Activated CD4-positive, alpha-beta memory T cell treated with anti-CD3 and anti-CD28 coated beads for 36 hours (primary cell): ENCODE measurements at regions of chrX and their contacts with region 1.

Region 1: GRCh38 chrX:155094468-155095061 is 23.3 kb downstream of the BRCC3 start:
- DNase-seq: peak; percentile 17
- H3K4me3 Mint-ChIP-seq: no peak overlapping the region
- H3K27ac Mint-ChIP-seq: no peak overlapping the region
- H3K4me1 Mint-ChIP-seq: peaks cover 6% of the 10 kb centered on the region
- H3K27me3 Mint-ChIP-seq: no peaks in the 10 kb centered on the region

Region 2: DNA sequence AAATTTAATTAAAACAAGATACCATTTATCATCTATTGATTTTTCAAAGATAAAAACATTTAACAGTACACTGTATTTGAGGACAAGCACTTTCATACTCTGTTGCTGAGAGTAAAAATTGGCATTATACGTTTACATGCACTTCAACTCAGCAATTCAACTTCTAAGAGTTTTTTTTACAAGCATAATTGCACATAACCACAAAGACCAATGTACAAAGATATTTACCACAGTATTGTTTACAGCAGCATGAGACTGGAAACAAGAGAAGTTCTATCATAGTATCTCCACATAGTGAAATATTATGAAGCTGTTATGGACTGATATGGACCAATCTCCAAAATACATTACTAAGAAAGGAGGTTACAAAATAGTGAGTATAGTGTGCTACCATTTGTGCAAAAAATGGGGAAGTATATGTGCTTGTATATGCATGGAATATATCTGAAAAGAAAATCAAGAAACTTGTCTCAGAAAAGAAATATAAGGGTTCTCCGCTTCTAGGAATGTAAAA is 354.6 kb before region 1 on chrX:
- CTCF ChIA-PET with region 1: no interaction called
- POLR2A ChIA-PET with region 1: no interaction called
- intact Hi-C with region 1: no loop called
- DNase-seq: no peak
- H3K4me3 Mint-ChIP-seq: no peak overlapping the region
- H3K27ac Mint-ChIP-seq: no peak overlapping the region
- H3K4me1 Mint-ChIP-seq: peaks cover 43% of the 10 kb centered on the region
- H3K27me3 Mint-ChIP-seq: no peaks in the 10 kb centered on the region

Region 3: DNA sequence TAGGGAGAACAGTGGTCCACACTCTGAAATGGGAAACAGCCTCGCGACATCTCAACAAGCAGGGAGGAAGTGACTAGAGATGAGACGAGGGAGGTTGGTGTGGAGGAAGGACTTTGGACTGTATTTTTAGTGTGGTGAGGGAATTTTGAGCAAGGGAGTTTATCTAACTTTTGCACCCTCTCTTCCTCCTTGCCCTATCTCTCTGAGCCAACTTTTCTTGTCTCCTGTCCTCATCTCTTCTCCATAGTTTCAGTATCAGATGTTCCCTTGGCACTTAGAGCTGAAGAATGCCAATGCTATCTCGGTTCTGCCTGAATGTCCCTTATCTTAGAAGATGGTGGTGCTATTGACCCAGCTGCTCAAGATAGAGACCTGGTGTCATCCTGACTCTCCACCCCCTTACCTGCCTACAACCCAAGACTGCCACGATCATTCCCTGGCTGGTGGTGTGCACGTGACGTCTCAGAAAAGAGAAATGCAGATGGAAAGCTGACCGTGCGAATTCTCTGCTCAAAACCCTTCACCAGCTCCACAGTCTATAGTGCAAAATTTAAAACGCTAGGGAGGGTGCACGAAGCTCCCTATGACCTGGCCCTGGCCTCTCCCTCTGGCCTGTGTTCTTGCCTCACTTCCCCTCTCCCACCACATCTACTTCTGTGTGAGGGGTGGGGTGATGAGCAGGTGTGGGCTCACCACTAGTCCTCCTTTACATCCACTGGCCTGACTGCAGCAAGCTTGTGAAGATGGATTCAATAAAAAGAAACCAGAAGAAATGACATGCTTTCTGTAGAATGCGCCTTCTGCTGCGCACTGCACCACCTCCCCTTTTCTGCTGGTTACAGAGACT is 310.2 kb before region 1 on chrX:
- CTCF ChIA-PET with region 1: no interaction called
- POLR2A ChIA-PET with region 1: no interaction called
- intact Hi-C with region 1: no loop called
- DNase-seq: no peak
- H3K4me3 Mint-ChIP-seq: no peak overlapping the region
- H3K27ac Mint-ChIP-seq: no peak overlapping the region
- H3K4me1 Mint-ChIP-seq: peaks cover 13% of the 10 kb centered on the region
- H3K27me3 Mint-ChIP-seq: no peaks in the 10 kb centered on the region

Region 4: DNA sequence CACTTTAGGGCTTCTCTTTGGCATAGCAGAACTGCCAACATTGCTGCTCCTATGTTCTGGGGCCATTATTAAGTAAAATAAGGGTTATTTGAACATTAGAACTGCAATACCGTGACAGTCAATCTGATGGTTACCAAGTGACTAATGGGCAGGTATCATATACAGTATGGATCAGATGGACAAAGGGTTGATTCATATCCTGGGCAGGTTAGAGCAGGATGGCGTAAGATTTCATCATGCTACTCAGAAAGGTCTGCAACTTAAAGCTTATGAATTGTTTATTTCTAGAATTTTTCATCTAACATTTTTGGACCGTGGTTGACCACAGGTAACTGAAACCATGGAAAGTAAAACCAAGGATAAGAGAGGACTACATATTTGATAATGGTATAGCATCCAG is 17.6 kb after region 1 on chrX:
- CTCF ChIA-PET with region 1: no interaction called
- POLR2A ChIA-PET with region 1: no interaction called
- intact Hi-C with region 1: no loop called
- DNase-seq: no peak
- H3K4me3 Mint-ChIP-seq: no peak overlapping the region
- H3K27ac Mint-ChIP-seq: no peak overlapping the region
- H3K4me1 Mint-ChIP-seq: peaks cover 9% of the 10 kb centered on the region
- H3K27me3 Mint-ChIP-seq: no peaks in the 10 kb centered on the region

Region 5: GRCh38 chrX:155148724-155149537 is 54.4 kb after region 1 on chrX:
- CTCF ChIA-PET with region 1: interaction called, 9 read pairs
- POLR2A ChIA-PET with region 1: no interaction called
- intact Hi-C with region 1: loop called (anchors 10 kb)
- DNase-seq: peak; percentile 36
- H3K4me3 Mint-ChIP-seq: no peak overlapping the region
- H3K27ac Mint-ChIP-seq: no peak overlapping the region
- H3K4me1 Mint-ChIP-seq: no peaks in the 10 kb centered on the region
- H3K27me3 Mint-ChIP-seq: no peaks in the 10 kb centered on the region

Region 6: DNA sequence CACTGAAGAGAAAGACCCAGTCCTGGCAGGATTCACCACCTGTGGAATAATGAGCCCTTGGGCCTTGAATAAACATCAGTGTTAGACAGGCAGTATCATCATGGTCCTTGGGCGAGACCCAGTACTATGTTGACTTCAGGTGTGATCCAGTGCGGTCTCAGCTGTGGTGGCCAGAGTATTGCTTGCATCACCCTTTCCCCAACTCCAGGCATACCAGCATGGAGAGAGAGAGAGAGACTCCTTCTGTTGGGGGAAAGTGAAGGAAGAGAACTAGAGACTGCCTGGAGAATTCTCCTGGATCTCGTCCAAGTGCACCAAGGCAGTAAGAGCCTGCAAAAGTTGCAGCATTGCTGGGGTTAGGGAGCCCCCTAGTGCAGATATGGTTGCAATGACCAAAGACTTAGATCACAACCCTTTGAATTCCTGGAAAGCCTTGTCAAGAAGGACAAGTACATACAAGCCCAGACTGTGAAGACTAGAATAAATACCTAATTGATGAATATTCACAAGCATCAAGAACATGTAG is 725.5 kb after region 1 on chrX:
- CTCF ChIA-PET with region 1: no interaction called
- POLR2A ChIA-PET with region 1: no interaction called
- intact Hi-C with region 1: loop called (anchors 10 kb)
- DNase-seq: peak; percentile 56
- H3K4me3 Mint-ChIP-seq: no peak overlapping the region
- H3K27ac Mint-ChIP-seq: no peak overlapping the region
- H3K4me1 Mint-ChIP-seq: no peaks in the 10 kb centered on the region
- H3K27me3 Mint-ChIP-seq: peaks cover 2% of the 10 kb centered on the region